ENCODE measurements at regions of chr3 and their contacts with region 1.

Region 1: DNA sequence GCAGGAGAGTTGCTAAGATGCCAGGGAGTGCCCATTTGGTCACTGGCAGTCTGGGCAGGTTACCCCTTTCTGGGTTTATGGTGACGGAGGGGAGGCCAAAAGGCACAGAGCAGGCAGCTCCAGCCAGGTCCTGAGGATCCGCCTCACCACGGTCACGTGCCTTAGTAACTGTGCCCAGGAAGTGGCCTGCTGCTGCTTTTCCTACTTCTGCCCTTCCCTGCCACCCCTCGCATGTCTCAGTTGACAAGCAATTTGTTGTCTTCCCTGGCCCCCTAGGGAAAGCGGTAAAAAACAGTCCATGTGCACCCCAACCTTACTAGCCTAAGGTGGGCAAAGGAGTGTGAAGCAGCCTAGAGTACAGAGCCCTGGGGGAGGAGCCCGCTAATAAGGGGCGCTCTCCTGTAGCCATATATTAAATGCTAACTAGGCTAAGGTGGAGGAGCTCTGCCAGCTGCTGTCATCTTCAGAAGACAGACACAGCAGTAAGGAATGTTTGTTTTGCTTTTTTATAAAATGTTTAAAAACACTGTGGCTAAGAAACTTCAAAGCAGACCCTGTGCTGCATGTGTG is 9.1 kb upstream of the LIPH start:
- DNase-seq: no peak
- CTCF ChIP-seq: no peak

Region 2: GRCh38 chr3:185498503-185499396 is 62.7 kb before region 1 on chr3 and contains the start of gene TMEM41A:
- CTCF ChIA-PET with region 1: interaction called, 12 read pairs
- POLR2A ChIA-PET with region 1: no interaction called
- DNase-seq: peak; percentile 98
- CTCF ChIP-seq: no peak

Region 3: GRCh38 chr3:185511711-185512110 is 49.7 kb before region 1 on chr3:
- CTCF ChIA-PET with region 1: interaction called, 12 read pairs
- POLR2A ChIA-PET with region 1: no interaction called
- DNase-seq: no peak
- CTCF ChIP-seq: no peak

Region 4: GRCh38 chr3:185549111-185549510 is 12.3 kb before region 1 on chr3:
- CTCF ChIA-PET with region 1: interaction called, 55 read pairs
- POLR2A ChIA-PET with region 1: no interaction called
- DNase-seq: no peak
- CTCF ChIP-seq: no peak

Region 5: DNA sequence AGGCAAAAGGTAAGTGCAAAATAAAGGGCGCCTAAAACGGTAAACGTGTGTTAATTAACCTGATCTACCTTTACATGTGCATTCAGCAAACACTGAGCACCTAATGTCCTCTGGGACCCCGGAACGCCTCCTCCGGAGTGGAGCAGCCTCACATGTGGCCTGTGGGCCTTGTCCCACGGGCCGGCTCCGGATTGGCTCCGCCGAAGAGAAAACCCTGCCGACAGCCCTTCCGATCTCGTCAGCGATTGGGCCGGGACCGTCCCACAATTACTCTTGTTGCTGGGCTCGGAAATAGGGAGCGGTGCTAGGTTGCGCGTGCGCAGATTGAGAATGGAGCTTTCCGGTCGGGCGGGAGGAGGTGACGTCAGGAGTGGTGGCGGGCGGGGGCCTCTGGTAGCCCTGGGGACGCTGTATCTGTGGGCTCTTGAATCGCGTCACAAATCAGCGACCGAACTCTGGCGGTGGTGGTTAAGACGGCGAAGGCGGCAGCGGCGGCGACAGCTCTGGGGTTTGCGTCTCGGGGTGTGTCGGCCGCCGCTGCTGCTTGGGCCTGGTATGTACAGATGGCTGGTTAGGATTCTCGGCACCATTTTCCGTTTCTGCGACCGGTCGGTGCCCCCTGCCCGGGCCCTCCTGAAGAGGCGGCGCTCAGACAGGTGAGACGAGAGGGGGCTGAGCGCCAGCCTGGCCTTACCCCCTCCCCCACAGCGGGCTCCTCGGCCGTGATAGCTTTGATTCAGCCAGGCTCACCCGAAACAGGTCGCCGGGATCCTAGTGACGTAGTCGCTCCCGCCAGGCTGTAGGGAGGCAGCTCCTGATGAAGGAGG is 24.6 kb after region 1 on chr3 and contains the start of gene SENP2:
- CTCF ChIA-PET with region 1: interaction called, 15 read pairs
- POLR2A ChIA-PET with region 1: no interaction called
- DNase-seq: peak; percentile 97
- CTCF ChIP-seq: no peak